K562 (cell line): ENCODE measurements at regions of chr15 and their contacts with region 1.

Region 1: GRCh38 chr15:60362321-60363086 is 35.3 kb downstream of the ANXA2 start:
- DNase-seq: peak in 1 of 4 experiments; percentile 22
- ATAC-seq: peak; percentile 47
- H3K4me3 ChIP-seq: no peak overlapping the region
- H3K27ac ChIP-seq: no peak overlapping the region
- H3K4me1 ChIP-seq: no peaks in the 10 kb centered on the region; a peak in 1 of 5 replicates
- H3K27me3 ChIP-seq: no peaks in the 10 kb centered on the region
- CTCF ChIP-seq: no peak
- EP300 ChIP-seq: no peak
- POLR2A ChIP-seq: no peak
- RAD21 ChIP-seq: no peak

Region 2: GRCh38 chr15:60389261-60390077 is 27.0 kb after region 1 on chr15:
- CTCF ChIA-PET with region 1: no interaction called
- POLR2A ChIA-PET with region 1: no interaction called
- in situ Hi-C with region 1: no loop called
- intact Hi-C with region 1: no loop called
- DNase-seq: no peak
- ATAC-seq: peak; percentile 21; the same call in 2 of the 3 replicates
- H3K4me3 ChIP-seq: no peak overlapping the region
- H3K27ac ChIP-seq: no peak overlapping the region
- H3K4me1 ChIP-seq: peaks cover 11 to 28% of the 10 kb centered on the region in 2 experiments
- H3K27me3 ChIP-seq: no peaks in the 10 kb centered on the region
- CTCF ChIP-seq: no peak
- EP300 ChIP-seq: no peak
- POLR2A ChIP-seq: no peak
- RAD21 ChIP-seq: no peak

Region 3: GRCh38 chr15:60444289-60444912 is 81.9 kb after region 1 on chr15:
- CTCF ChIA-PET with region 1: interaction called, 16 read pairs
- POLR2A ChIA-PET with region 1: no interaction called
- in situ Hi-C with region 1: no loop called
- intact Hi-C with region 1: loop called (anchors 1 kb)
- DNase-seq: no peak
- ATAC-seq: no peak
- H3K4me3 ChIP-seq: no peak overlapping the region
- H3K27ac ChIP-seq: no peak overlapping the region
- H3K4me1 ChIP-seq: no peaks in the 10 kb centered on the region
- H3K27me3 ChIP-seq: no peaks in the 10 kb centered on the region
- CTCF ChIP-seq: peak in 1 of 3 experiments; percentile 62; a peak in 3 of 6 replicates
- EP300 ChIP-seq: no peak
- POLR2A ChIP-seq: no peak
- RAD21 ChIP-seq: peak; percentile 44 to 46

Region 4: DNA sequence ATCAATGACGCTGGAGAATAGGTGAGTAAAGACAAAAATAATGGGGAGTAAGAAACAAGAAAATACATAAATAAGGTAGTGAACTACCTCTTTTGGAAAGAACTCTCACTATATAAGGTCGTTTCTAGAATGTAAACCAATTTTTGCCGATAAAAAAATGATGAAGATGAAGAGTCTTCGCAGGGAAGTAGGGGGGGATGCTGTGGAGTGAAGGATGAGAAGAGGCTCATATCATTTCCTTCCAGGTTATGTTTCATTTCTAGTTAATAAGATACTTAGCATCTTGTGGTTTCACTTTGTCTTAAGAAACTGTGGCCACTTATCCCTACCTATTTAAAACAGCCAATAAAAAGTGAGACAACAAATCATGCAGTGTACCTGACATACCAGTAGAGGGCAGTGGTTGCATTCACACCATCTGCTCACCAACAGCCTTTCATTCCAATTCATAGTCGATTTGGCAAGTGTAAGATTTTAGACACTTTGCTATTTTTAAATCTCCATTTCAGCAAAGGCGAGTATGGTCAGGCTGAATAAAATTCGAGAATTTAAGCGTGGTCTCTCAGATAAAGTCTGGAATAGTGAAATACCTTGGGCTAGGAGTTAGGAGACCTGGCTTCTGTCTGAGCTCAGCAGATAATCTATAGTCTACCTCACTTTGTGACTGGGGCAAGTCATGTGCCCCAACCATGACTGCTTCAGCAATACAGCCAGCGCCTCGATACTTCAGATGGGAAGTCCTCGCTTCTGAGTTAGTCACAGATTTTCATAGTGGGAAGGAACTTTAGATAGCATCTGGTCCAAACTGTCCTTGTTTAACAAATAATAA is 145.3 kb after region 1 on chr15:
- CTCF ChIA-PET with region 1: no interaction called
- POLR2A ChIA-PET with region 1: no interaction called
- in situ Hi-C with region 1: loop called (anchors 5 kb)
- intact Hi-C with region 1: loop called (anchors 5 kb)
- DNase-seq: peak; percentile 55 to 68 (median 62)
- ATAC-seq: peak; percentile 88
- H3K4me3 ChIP-seq: no peak overlapping the region
- H3K27ac ChIP-seq: no peak overlapping the region
- H3K4me1 ChIP-seq: no peaks in the 10 kb centered on the region
- H3K27me3 ChIP-seq: peaks cover 18 to 21% of the 10 kb centered on the region in 2 experiments
- CTCF ChIP-seq: peak; percentile 65 to 92 (median 89)
- EP300 ChIP-seq: no peak
- POLR2A ChIP-seq: no peak
- RAD21 ChIP-seq: peak; percentile 46 to 69

Region 5: GRCh38 chr15:60520825-60521368 is 158.4 kb after region 1 on chr15:
- CTCF ChIA-PET with region 1: interaction called, 4 read pairs
- POLR2A ChIA-PET with region 1: no interaction called
- in situ Hi-C with region 1: no loop called
- intact Hi-C with region 1: loop called (anchors 1 kb)
- DNase-seq: peak; percentile 52 to 80 (median 54)
- ATAC-seq: peak; percentile 91
- H3K4me3 ChIP-seq: no peak overlapping the region
- H3K27ac ChIP-seq: no peak overlapping the region
- H3K4me1 ChIP-seq: no peaks in the 10 kb centered on the region
- H3K27me3 ChIP-seq: peaks cover 2 to 6% of the 10 kb centered on the region in 2 experiments; a peak in 3 of 5 replicates
- CTCF ChIP-seq: peak; percentile 80 to 94 (median 87)
- EP300 ChIP-seq: no peak
- POLR2A ChIP-seq: no peak
- RAD21 ChIP-seq: peak; percentile 86 to 89